ENCODE measurements at regions of chr4 and their contacts with region 1.

Region 1: GRCh38 chr4:181528570-181529184 is 714.5 kb upstream of the TENM3 start:
- DNase-seq: no peak
- H3K4me3 Mint-ChIP-seq: no peak overlapping the region
- H3K27ac Mint-ChIP-seq: no peak overlapping the region
- H3K4me1 Mint-ChIP-seq: no peaks in the 10 kb centered on the region
- H3K27me3 Mint-ChIP-seq: no peaks in the 10 kb centered on the region

Region 2: GRCh38 chr4:180664766-180665368 is 863.8 kb before region 1 on chr4:
- intact Hi-C with region 1: loop called (anchors 2 kb)
- DNase-seq: peak; percentile 19
- H3K4me3 Mint-ChIP-seq: no peak overlapping the region
- H3K27ac Mint-ChIP-seq: no peak overlapping the region
- H3K4me1 Mint-ChIP-seq: no peaks in the 10 kb centered on the region
- H3K27me3 Mint-ChIP-seq: no peaks in the 10 kb centered on the region

Region 3: DNA sequence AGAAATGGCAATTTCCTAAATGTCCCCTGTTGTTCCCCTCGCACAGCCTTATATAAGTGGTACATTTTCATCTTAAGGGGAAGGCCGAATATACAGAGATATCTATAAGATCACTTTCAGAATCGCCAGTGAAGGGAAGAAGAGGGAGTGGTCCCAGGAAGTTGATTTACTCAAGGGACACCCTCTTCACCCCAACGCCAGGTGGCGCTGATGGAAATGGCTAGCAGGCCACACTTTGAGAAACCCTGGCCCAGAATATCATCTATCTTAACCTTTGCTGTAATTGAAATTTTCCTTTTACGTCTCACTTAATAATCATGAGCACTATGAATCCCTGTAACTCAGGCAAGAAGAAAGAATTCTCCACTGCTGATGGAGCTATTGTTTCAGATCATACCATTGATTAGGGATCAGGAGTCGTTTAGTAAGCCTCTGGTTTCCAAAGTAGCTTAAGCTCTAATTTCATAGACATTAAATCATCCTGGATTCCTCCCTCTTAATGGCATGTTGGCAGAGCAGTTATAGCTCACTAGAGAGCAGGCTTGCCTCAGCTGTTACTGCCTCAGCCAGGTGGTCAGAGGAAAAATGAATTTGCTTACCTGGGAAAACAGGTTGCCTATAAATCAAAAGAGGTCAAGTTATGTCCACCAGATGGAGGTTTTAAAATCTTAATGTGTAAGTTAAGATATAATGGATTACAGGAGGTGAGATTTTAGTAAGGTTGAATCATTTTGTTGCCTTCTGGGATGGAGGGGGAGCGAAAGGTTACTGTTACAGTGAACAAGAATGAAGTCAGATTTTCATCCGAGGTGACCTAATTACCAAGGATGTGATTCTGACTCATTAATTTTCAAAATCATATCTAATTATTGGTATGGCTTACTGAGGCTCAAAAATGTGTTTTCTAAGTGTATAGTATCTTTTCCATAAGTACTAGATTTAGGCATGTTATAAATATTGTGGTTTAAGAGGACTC is 226.7 kb before region 1 on chr4:
- intact Hi-C with region 1: loop called (anchors 1 kb)
- DNase-seq: no peak
- H3K4me3 Mint-ChIP-seq: no peak overlapping the region
- H3K27ac Mint-ChIP-seq: no peak overlapping the region
- H3K4me1 Mint-ChIP-seq: no peaks in the 10 kb centered on the region
- H3K27me3 Mint-ChIP-seq: no peaks in the 10 kb centered on the region

Region 4: GRCh38 chr4:181503687-181504390 is 24.8 kb before region 1 on chr4:
- intact Hi-C with region 1: no loop called
- DNase-seq: no peak
- H3K4me3 Mint-ChIP-seq: no peak overlapping the region
- H3K27ac Mint-ChIP-seq: no peak overlapping the region
- H3K4me1 Mint-ChIP-seq: no peaks in the 10 kb centered on the region
- H3K27me3 Mint-ChIP-seq: no peaks in the 10 kb centered on the region

Region 5: GRCh38 chr4:181897935-181898334 is 369.3 kb after region 1 on chr4:
- intact Hi-C with region 1: no loop called
- DNase-seq: no peak
- H3K4me3 Mint-ChIP-seq: no peak overlapping the region
- H3K27ac Mint-ChIP-seq: no peak overlapping the region
- H3K4me1 Mint-ChIP-seq: no peaks in the 10 kb centered on the region
- H3K27me3 Mint-ChIP-seq: no peaks in the 10 kb centered on the region